HCT116 (cell line): ENCODE measurements at regions of chr2 and their contacts with region 1.

Region 1: DNA sequence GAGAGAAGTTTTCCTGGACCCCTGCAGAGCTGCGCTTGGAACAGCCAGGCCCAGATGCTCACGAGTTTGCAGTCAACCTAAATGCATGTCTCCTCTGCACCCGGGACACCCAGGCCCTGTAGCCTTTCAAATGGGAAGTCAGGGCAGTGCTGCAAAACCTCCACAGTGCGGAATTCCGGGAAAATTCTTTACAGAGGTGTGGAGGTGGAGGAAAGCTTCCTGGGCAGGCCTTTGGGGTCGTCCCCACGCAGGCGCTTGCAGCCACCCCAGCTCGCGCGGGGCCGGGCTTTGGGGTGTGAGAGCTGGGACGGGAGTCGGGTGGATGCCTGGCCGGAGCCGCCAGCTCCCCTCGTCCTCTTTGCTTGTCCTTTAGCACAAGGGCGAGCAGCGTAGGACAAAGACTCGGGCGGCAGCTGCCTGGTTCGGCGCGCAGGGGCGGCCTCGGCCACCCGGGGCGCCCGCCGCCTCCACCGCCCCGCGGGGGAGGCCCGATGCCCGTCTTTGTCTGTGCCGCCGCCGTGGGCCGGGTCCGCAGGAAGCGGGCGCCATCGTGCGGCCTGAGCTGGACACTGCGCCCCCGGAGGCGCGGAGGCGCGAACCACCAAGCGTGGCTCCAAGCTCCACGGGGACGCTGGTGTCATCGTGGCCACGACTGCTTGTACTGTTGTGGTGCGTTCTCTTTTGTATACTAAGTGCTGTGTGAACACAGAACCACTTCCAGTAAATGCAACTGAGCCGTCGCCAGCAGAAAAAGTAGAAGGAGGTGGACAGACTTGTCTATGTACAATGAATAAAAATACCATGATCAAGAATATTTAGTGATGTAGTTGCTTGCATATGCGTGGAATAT is 28.2 kb upstream of the BCL11A start:
- DNase-seq: no peak
- ATAC-seq: peak; percentile 93
- H3K4me3 ChIP-seq: peak overlapping the region; percentile 26 to 43
- H3K27ac ChIP-seq: no peak overlapping the region
- H3K4me1 ChIP-seq: peaks cover 0 to 14% of the 10 kb centered on the region in 2 experiments; a peak in 2 of 4 replicates
- H3K27me3 ChIP-seq: peaks cover 5% of the 10 kb centered on the region; the same call in 1 of the 2 replicates
- CTCF ChIP-seq: peak; percentile 56 to 89 (median 87); a peak in 5 of 6 replicates
- POLR2A ChIP-seq: no peak
- RAD21 ChIP-seq: peak; percentile 85

Region 2: GRCh38 chr2:59025157-59025757 is 1556.4 kb before region 1 on chr2:
- CTCF ChIA-PET with region 1: interaction called, 12 read pairs
- POLR2A ChIA-PET with region 1: no interaction called
- RAD21 ChIA-PET with region 1: no interaction called
- intact Hi-C with region 1: no loop called
- DNase-seq: peak; percentile 8
- ATAC-seq: peak; percentile 89
- H3K4me3 ChIP-seq: no peak overlapping the region
- H3K27ac ChIP-seq: no peak overlapping the region
- H3K4me1 ChIP-seq: no peaks in the 10 kb centered on the region
- H3K27me3 ChIP-seq: peaks cover 9% of the 10 kb centered on the region; the same call in 1 of the 2 replicates
- CTCF ChIP-seq: peak; percentile 50 to 96 (median 94); a peak in 5 of 6 replicates
- POLR2A ChIP-seq: no peak
- RAD21 ChIP-seq: peak; percentile 52

Region 3: GRCh38 chr2:60560734-60561644 is 20.7 kb before region 1 on chr2:
- CTCF ChIA-PET with region 1: interaction called, 38 read pairs
- POLR2A ChIA-PET with region 1: no interaction called
- RAD21 ChIA-PET with region 1: interaction called in 1 of 2 experiments, 3 read pairs
- intact Hi-C with region 1: no loop called
- DNase-seq: no peak
- ATAC-seq: peak; percentile 84
- H3K4me3 ChIP-seq: no peak overlapping the region
- H3K27ac ChIP-seq: no peak overlapping the region
- H3K4me1 ChIP-seq: no peaks in the 10 kb centered on the region
- H3K27me3 ChIP-seq: peaks cover 75% of the 10 kb centered on the region
- CTCF ChIP-seq: peak; percentile 38 to 69 (median 50); a peak in 5 of 6 replicates
- POLR2A ChIP-seq: no peak
- RAD21 ChIP-seq: peak; percentile 37; the same call in 1 of the 2 replicates

Region 4: GRCh38 chr2:60569680-60570111 is 12.0 kb before region 1 on chr2:
- CTCF ChIA-PET with region 1: interaction called, 15 read pairs
- POLR2A ChIA-PET with region 1: no interaction called
- RAD21 ChIA-PET with region 1: no interaction called
- intact Hi-C with region 1: no loop called
- DNase-seq: no peak
- ATAC-seq: no peak
- H3K4me3 ChIP-seq: no peak overlapping the region
- H3K27ac ChIP-seq: no peak overlapping the region
- H3K4me1 ChIP-seq: no peaks in the 10 kb centered on the region
- H3K27me3 ChIP-seq: peaks cover 82% of the 10 kb centered on the region
- CTCF ChIP-seq: no peak
- POLR2A ChIP-seq: no peak
- RAD21 ChIP-seq: no peak